HepG2 (cell line): ENCODE measurements at regions of chr15 and their contacts with region 1.

Region 1: DNA sequence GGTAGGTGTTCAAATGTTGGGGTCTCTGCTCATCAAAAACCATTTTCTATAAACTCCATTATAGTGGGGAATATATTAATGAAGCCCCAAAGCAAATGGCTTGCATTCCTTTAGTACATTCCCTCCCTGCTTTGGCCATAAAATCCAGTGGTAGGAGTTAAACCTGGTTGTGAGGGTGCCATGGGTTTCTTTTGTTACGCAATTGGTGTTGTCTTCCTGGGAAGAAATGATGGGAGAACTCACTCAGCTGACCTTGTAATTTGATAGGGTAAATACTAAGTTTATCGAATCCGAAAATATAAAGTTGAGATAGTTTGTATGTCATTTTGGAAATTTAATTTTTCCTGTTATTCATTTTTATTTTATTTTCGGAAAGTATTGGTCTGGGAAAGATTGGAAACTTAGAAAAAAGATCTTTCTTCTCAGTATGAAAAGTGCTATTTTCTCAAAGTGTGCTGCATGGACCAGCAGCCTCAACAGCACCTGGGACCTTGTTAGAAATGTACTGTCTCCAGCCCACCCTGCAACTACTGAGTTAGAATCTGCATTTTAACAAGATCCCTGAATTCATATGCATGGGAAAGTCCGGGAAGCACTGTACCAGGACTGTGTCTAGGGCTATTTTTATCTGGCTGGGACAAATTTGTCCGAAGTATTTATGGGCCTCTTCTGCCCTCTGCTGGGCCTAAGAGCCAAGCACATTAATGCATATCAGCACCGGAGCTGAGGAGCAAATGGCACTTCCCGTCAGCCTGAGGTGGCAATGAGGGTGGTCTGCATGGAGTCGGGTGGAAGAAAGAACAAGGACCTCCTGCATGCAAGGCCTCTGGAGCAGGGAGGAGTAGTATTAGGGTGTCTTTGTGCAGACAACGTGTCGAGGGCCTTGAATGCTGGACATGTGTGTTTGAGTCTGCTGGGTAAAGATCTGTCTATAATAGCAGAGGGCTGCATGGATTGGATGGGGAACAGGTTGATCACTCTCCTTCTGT is 54.7 kb downstream of the FAM81A start:
- DNase-seq: peak; percentile 65
- ATAC-seq: peak; percentile 95
- H3K4me3 ChIP-seq: no peak overlapping the region; a peak in 1 of 6 replicates
- H3K27ac ChIP-seq: no peak overlapping the region
- H3K4me1 ChIP-seq: peaks cover 12% of the 10 kb centered on the region; the same call in 1 of the 2 replicates
- H3K27me3 ChIP-seq: 0 out of 5 replicates have a peak, but pooled peaks cover 0 to 3% of the 10 kb centered on the region in 2 experiments
- CTCF ChIP-seq: peak; percentile 93
- EP300 ChIP-seq: no peak
- POLR2A ChIP-seq: no peak
- RAD21 ChIP-seq: peak; percentile 90

Region 2: GRCh38 chr15:58227706-58228543 is 1264.8 kb before region 1 on chr15:
- CTCF ChIA-PET with region 1: no interaction called
- POLR2A ChIA-PET with region 1: no interaction called
- in situ Hi-C with region 1: loop called (anchors 25 kb)
- intact Hi-C with region 1: no loop called
- DNase-seq: peak; percentile 62
- ATAC-seq: peak; percentile 65
- H3K4me3 ChIP-seq: no peak overlapping the region
- H3K27ac ChIP-seq: no peak overlapping the region
- H3K4me1 ChIP-seq: peaks cover 18% of the 10 kb centered on the region; the same call in 1 of the 2 replicates
- H3K27me3 ChIP-seq: no peaks in the 10 kb centered on the region
- CTCF ChIP-seq: peak; percentile 84
- EP300 ChIP-seq: no peak
- POLR2A ChIP-seq: no peak
- RAD21 ChIP-seq: peak; percentile 83; the same call in 1 of the 2 replicates

Region 3: GRCh38 chr15:58980351-58980939 is 512.2 kb before region 1 on chr15:
- CTCF ChIA-PET with region 1: interaction called, 12 read pairs
- POLR2A ChIA-PET with region 1: no interaction called
- in situ Hi-C with region 1: loop called (anchors 10 kb)
- intact Hi-C with region 1: no loop called
- DNase-seq: peak; percentile 23
- ATAC-seq: no peak
- H3K4me3 ChIP-seq: no peak overlapping the region
- H3K27ac ChIP-seq: no peak overlapping the region
- H3K4me1 ChIP-seq: peaks cover 13% of the 10 kb centered on the region
- H3K27me3 ChIP-seq: no peaks in the 10 kb centered on the region
- CTCF ChIP-seq: peak; percentile 53
- EP300 ChIP-seq: no peak
- POLR2A ChIP-seq: no peak
- RAD21 ChIP-seq: no peak

Region 4: GRCh38 chr15:59138243-59138642 is 354.4 kb before region 1 on chr15:
- CTCF ChIA-PET with region 1: interaction called, 13 read pairs
- POLR2A ChIA-PET with region 1: no interaction called
- in situ Hi-C with region 1: no loop called
- intact Hi-C with region 1: no loop called
- DNase-seq: peak; percentile 54
- ATAC-seq: peak; percentile 98
- H3K4me3 ChIP-seq: no peak overlapping the region
- H3K27ac ChIP-seq: no peak overlapping the region
- H3K4me1 ChIP-seq: no peaks in the 10 kb centered on the region
- H3K27me3 ChIP-seq: no peaks in the 10 kb centered on the region
- CTCF ChIP-seq: peak; percentile 83
- EP300 ChIP-seq: no peak
- POLR2A ChIP-seq: no peak
- RAD21 ChIP-seq: peak; percentile 69

Region 5: DNA sequence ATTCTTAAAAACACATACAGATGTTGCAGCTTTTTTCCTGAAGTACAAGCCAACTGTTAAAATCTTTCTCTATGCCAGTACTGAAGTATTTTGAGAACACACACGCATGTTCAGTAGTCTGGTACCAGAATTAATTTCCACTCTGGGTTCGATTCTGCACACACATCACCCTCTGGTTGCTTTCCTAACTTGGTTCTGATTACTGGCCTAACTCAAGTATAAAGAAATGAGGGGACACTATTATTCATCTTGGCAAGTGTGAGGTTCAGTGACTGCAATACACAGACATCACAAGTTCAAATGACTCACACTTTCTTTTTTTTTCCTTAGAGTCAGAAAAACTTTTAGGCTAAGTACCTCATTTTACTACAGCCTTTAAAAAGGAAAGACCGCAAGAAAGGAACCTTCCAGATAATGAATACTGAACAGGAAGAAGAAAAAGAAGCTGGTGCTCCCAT is 323.4 kb before region 1 on chr15:
- CTCF ChIA-PET with region 1: interaction called, 10 read pairs
- POLR2A ChIA-PET with region 1: no interaction called
- in situ Hi-C with region 1: loop called (anchors 5 kb)
- intact Hi-C with region 1: no loop called
- DNase-seq: no peak
- ATAC-seq: no peak
- H3K4me3 ChIP-seq: no peak overlapping the region
- H3K27ac ChIP-seq: no peak overlapping the region
- H3K4me1 ChIP-seq: peaks cover 52% of the 10 kb centered on the region
- H3K27me3 ChIP-seq: no peaks in the 10 kb centered on the region
- CTCF ChIP-seq: no peak
- EP300 ChIP-seq: no peak
- POLR2A ChIP-seq: no peak
- RAD21 ChIP-seq: no peak

Region 6: GRCh38 chr15:59247364-59247763 is 245.3 kb before region 1 on chr15:
- CTCF ChIA-PET with region 1: interaction called, 17 read pairs
- POLR2A ChIA-PET with region 1: no interaction called
- in situ Hi-C with region 1: no loop called
- intact Hi-C with region 1: loop called (anchors 1 kb)
- DNase-seq: peak; percentile 74
- ATAC-seq: peak; percentile 91
- H3K4me3 ChIP-seq: no peak overlapping the region
- H3K27ac ChIP-seq: no peak overlapping the region
- H3K4me1 ChIP-seq: peaks cover 6% of the 10 kb centered on the region
- H3K27me3 ChIP-seq: no peaks in the 10 kb centered on the region
- CTCF ChIP-seq: peak; percentile 74
- EP300 ChIP-seq: no peak
- POLR2A ChIP-seq: no peak
- RAD21 ChIP-seq: peak; percentile 59